ENCODE measurements at regions of chr7 and their contacts with region 1.

Region 1: DNA sequence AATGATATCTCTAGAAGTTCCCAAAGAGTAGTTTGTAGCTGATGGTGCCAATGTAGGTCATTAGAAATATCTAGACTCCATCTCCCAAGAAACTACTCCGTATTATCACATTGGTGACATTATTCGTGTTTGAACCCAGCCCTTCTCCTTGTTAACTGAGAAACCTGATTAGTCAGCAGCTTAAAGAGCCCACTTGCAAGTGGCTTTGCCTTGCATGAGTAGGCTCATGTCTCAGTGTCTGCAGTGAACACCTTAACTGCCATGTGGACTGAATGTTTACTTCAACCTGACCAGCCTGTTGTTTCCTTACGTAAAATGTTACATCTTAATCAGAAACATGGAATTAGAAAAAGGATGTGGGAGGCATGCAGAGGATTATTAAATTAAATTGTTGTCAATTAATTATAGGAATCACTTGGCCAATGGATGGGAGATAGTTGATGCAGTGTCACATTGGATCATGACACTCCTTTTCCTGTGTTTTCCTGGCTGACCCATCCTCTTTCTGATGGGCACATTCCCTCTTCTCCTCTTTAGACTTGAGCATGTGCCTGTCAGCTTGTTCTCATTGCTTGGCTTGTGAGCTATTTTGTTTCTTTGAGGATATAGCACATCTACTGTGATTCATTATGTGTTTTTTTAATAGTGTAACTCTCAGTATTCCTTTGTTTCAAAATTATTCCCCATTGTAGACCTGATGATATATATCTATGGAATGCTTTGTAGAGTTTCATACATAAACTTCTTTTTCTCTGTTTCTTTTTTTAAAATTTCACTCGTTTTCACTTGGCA is 18.0 kb downstream of the STARD3NL start:
- DNase-seq: no peak
- ATAC-seq: no peak
- H3K4me3 ChIP-seq: no peak overlapping the region
- H3K27ac ChIP-seq: no peak overlapping the region
- H3K4me1 ChIP-seq: peaks cover 0 to 54% (median 40%) of the 10 kb centered on the region in 9 donors
- H3K27me3 ChIP-seq: no peaks in the 10 kb centered on the region
- CTCF ChIP-seq: no peak

Region 2: GRCh38 chr7:38178004-38178694 is 17.9 kb before region 1 on chr7 and contains the start of gene STARD3NL:
- intact Hi-C with region 1: loop called in 2 of 10 experiments (anchors 1 to 2 kb)
- DNase-seq: peak; percentile 94 to 100
- ATAC-seq: peak; percentile 98 to 99 (median 99)
- H3K4me3 ChIP-seq: peak within 1 kb of the TSS; percentile 64 to 94 (median 81)
- H3K27ac ChIP-seq: peak within 1 kb of the TSS; percentile 66 to 96 (median 90)
- H3K4me1 ChIP-seq: peaks cover 2 to 52% (median 40%) of the 10 kb centered on the region in 9 donors
- H3K27me3 ChIP-seq: no peaks in the 10 kb centered on the region
- CTCF ChIP-seq: peak in 1 of 9 donors; percentile 18
- total RNA-seq, gene STARD3NL: 17.6 to 29.3 (median 24.2) TPM